ENCODE measurements at regions of chr14 and their contacts with region 1.

Region 1: GRCh38 chr14:59126710-59127432 is 61.6 kb upstream of the DAAM1 start:
- DNase-seq: peak in 4 of 5 donors; percentile 7 to 51 (median 48)
- H3K4me3 ChIP-seq: no peak overlapping the region
- H3K4me3 Mint-ChIP-seq: no peak overlapping the region
- H3K27ac ChIP-seq: no peak overlapping the region
- H3K27ac Mint-ChIP-seq: no peak overlapping the region
- H3K4me1 ChIP-seq: no peaks in the 10 kb centered on the region
- H3K4me1 Mint-ChIP-seq: no peaks in the 10 kb centered on the region
- H3K27me3 ChIP-seq: no peaks in the 10 kb centered on the region
- H3K27me3 Mint-ChIP-seq: peaks cover 9 to 61% of the 10 kb centered on the region in 2 donors

Region 2: GRCh38 chr14:59046746-59047145 is 80.1 kb before region 1 on chr14:
- CTCF ChIA-PET with region 1: no interaction called
- POLR2A ChIA-PET with region 1: no interaction called
- DNase-seq: no peak
- H3K4me3 ChIP-seq: no peak overlapping the region
- H3K4me3 Mint-ChIP-seq: no peak overlapping the region
- H3K27ac ChIP-seq: no peak overlapping the region
- H3K27ac Mint-ChIP-seq: no peak overlapping the region
- H3K4me1 ChIP-seq: no peaks in the 10 kb centered on the region
- H3K4me1 Mint-ChIP-seq: no peaks in the 10 kb centered on the region
- H3K27me3 ChIP-seq: no peaks in the 10 kb centered on the region
- H3K27me3 Mint-ChIP-seq: peaks cover 2 to 24% of the 10 kb centered on the region in 2 donors

Region 3: DNA sequence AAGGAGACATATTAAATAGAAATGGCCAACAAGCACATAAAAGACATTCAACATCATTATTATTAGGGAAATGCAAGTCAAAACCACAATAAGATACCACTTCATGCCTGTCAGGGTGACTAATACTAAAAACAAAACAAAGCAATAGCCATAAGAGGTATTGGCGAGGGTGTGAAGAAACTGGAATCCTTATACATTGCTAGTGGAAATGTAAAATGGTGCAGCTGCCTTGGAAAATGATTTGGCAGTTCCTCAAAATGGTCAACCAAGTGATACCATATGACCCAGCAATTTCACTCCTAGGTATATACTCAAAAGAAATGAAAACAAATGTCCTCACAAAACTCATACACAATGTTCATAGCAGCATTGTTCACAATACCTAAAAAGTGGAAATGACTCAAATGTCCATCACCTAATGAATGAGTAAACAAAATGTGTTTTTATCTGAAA is 311.4 kb after region 1 on chr14:
- CTCF ChIA-PET with region 1: interaction called, 38 read pairs
- POLR2A ChIA-PET with region 1: no interaction called
- DNase-seq: no peak
- H3K4me3 ChIP-seq: no peak overlapping the region
- H3K4me3 Mint-ChIP-seq: no peak overlapping the region
- H3K27ac ChIP-seq: no peak overlapping the region
- H3K27ac Mint-ChIP-seq: no peak overlapping the region
- H3K4me1 ChIP-seq: no peaks in the 10 kb centered on the region
- H3K4me1 Mint-ChIP-seq: no peaks in the 10 kb centered on the region
- H3K27me3 ChIP-seq: no peaks in the 10 kb centered on the region
- H3K27me3 Mint-ChIP-seq: no peaks in the 10 kb centered on the region

Region 4: DNA sequence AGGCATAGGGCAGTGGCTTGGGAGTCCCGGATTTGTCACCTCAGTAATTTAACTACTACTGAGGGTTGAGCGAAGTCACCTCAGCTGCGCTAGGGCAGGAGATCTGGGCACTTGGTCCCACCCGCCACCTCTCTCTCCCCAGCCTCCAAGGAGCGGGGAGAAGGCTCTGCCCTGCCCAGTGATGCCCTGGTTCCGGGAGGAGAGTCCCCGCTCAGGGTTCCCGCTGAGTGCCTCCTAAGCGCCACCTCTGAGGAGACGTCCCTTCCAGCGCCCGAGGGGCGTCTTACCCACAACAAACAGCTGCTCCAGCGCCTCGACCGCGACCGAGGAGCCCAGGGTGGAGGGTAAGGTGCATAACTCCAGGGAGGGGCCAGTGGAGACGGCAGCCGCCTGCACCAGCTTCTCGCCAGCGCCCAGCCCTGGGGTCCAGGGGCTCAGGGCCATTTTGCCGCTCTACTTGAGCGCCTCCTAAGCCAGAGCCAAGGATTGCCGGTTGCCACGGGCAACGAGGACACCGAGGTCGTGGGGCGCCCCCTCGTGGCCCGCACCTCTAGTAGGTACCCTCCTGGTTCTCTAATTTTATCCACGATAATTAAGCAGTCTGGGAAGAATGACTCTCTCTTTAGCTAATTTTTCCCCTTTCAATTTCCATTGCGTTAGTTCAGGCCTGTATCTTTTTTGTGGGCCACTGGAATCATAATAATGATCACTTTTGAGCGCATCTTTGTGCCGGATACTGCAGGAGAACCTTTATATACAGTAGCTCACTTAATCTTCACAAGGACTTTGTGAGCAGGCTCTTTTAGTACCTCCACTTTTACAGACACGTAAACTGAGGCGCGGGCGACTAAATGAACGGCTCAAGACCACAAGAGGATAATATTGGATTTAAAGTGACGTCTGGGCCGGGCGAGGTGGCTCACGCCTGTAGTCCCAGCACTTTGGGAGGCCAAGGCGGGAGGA is 449.7 kb after region 1 on chr14 and contains the start of gene CCDC175:
- CTCF ChIA-PET with region 1: interaction called, 15 read pairs
- POLR2A ChIA-PET with region 1: no interaction called
- DNase-seq: peak; percentile 69 to 89 (median 71)
- H3K4me3 ChIP-seq: peak within 1 kb of the TSS; percentile 64
- H3K4me3 Mint-ChIP-seq: peak within 1 kb of the TSS; percentile 49 to 91 (median 75)
- H3K27ac ChIP-seq: no peak within 1 kb of the TSS
- H3K27ac Mint-ChIP-seq: peak within 1 kb of the TSS in 2 of 8 donors; percentile 32 to 63
- H3K4me1 ChIP-seq: peaks cover 8% of the 10 kb centered on the region
- H3K4me1 Mint-ChIP-seq: peaks cover 7 to 12% (median 10%) of the 10 kb centered on the region in 3 donors
- H3K27me3 ChIP-seq: no peaks in the 10 kb centered on the region
- H3K27me3 Mint-ChIP-seq: peaks cover 5 to 26% of the 10 kb centered on the region in 2 donors
- total RNA-seq, gene CCDC175: not detected